MCF 10A (cell line): ENCODE measurements at regions of chr2 and their contacts with region 1.

Region 1: DNA sequence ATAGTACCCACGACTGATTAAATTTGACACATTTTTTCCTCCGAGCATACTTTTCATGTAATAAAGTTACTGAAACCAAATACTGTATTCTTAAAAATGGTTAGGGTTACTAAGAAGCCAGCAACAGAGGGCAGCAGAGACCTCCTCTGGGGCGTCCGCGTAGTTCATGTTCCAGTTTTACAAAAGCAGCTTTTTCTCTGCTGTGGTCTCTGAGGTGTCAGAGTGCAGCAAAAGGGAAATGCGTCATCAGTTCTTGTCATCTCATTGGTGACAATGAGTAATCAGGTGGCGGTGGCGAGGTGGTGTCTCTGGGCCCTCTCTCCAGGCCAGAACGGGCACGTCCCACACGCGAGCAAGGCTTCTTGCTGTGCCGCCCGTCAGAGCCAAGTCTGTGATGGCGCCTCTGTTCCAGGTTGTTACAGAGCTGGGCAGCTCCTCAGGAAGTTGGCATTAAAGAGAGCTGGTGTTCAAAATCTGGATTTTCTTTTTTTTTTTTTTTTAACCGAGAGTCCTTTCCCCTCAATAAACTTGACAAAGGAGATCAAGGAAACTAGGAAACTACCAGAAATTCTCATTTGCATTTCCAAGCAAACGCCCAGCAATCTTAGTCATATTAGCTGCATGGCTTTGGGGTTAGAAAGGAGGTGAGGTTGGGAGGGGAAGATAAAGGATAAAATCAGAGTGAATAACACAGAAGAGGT is 98.6 kb upstream of the BZW1 start:
- DNase-seq: peak; percentile 88
- H3K4me3 Mint-ChIP-seq: peak overlapping the region; percentile 66
- H3K27ac Mint-ChIP-seq: peak overlapping the region; percentile 76
- H3K4me1 Mint-ChIP-seq: peaks cover 11% of the 10 kb centered on the region
- H3K27me3 Mint-ChIP-seq: peaks cover under 1% of the 10 kb centered on the region
- CTCF ChIP-seq: peak; percentile 94

Region 2: GRCh38 chr2:200735061-200735460 is 21.9 kb after region 1 on chr2:
- CTCF ChIA-PET with region 1: interaction called, 86 read pairs
- POLR2A ChIA-PET with region 1: interaction called, 6 read pairs
- intact Hi-C with region 1: loop called (anchors 1 kb)
- DNase-seq: no peak
- H3K4me3 Mint-ChIP-seq: no peak overlapping the region
- H3K27ac Mint-ChIP-seq: no peak overlapping the region
- H3K4me1 Mint-ChIP-seq: no peaks in the 10 kb centered on the region
- H3K27me3 Mint-ChIP-seq: no peaks in the 10 kb centered on the region
- CTCF ChIP-seq: no peak

Region 3: GRCh38 chr2:200756618-200757321 is 43.6 kb after region 1 on chr2:
- CTCF ChIA-PET with region 1: interaction called, 17 read pairs
- POLR2A ChIA-PET with region 1: interaction called, 9 read pairs
- intact Hi-C with region 1: no loop called
- DNase-seq: peak; percentile 89
- H3K4me3 Mint-ChIP-seq: no peak overlapping the region
- H3K27ac Mint-ChIP-seq: peak overlapping the region; percentile 74
- H3K4me1 Mint-ChIP-seq: peaks cover 25% of the 10 kb centered on the region
- H3K27me3 Mint-ChIP-seq: no peaks in the 10 kb centered on the region
- CTCF ChIP-seq: no peak

Region 4: GRCh38 chr2:200787348-200788120 is 74.4 kb after region 1 on chr2:
- CTCF ChIA-PET with region 1: interaction called, 5 read pairs
- POLR2A ChIA-PET with region 1: interaction called, 5 read pairs
- intact Hi-C with region 1: loop called (anchors 2 kb)
- DNase-seq: peak; percentile 93
- H3K4me3 Mint-ChIP-seq: peak overlapping the region; percentile 10
- H3K27ac Mint-ChIP-seq: peak overlapping the region; percentile 89
- H3K4me1 Mint-ChIP-seq: peaks cover 19% of the 10 kb centered on the region
- H3K27me3 Mint-ChIP-seq: no peaks in the 10 kb centered on the region
- CTCF ChIP-seq: no peak

Region 5: GRCh38 chr2:200811336-200812121 is 98.4 kb after region 1 on chr2 and contains the start of gene BZW1:
- CTCF ChIA-PET with region 1: interaction called, 18 read pairs
- POLR2A ChIA-PET with region 1: interaction called, 29 read pairs
- intact Hi-C with region 1: loop called (anchors 1 kb)
- DNase-seq: peak; percentile 97
- H3K4me3 Mint-ChIP-seq: peak within 1 kb of the TSS; percentile 99
- H3K27ac Mint-ChIP-seq: peak within 1 kb of the TSS; percentile 98
- H3K4me1 Mint-ChIP-seq: peaks cover 41% of the 10 kb centered on the region
- H3K27me3 Mint-ChIP-seq: no peaks in the 10 kb centered on the region
- CTCF ChIP-seq: no peak
- total RNA-seq, gene BZW1: 353 and 371 TPM in 2 replicates

Region 6: GRCh38 chr2:200888704-200889625 is 175.8 kb after region 1 on chr2 and contains the starts of genes NIF3L1 and PPIL3:
- CTCF ChIA-PET with region 1: interaction called, 3 read pairs
- POLR2A ChIA-PET with region 1: interaction called, 12 read pairs
- intact Hi-C with region 1: loop called (anchors 1 kb)
- DNase-seq: peak; percentile 98
- H3K4me3 Mint-ChIP-seq: peak within 1 kb of the TSS; percentile 98
- H3K27ac Mint-ChIP-seq: peak within 1 kb of the TSS; percentile 98
- H3K4me1 Mint-ChIP-seq: peaks cover 21% of the 10 kb centered on the region
- H3K27me3 Mint-ChIP-seq: no peaks in the 10 kb centered on the region
- CTCF ChIP-seq: no peak
- total RNA-seq, gene NIF3L1: 19.3 and 26.1 TPM in 2 replicates
- total RNA-seq, gene PPIL3: 33.9 and 35.4 TPM in 2 replicates

Region 7: DNA sequence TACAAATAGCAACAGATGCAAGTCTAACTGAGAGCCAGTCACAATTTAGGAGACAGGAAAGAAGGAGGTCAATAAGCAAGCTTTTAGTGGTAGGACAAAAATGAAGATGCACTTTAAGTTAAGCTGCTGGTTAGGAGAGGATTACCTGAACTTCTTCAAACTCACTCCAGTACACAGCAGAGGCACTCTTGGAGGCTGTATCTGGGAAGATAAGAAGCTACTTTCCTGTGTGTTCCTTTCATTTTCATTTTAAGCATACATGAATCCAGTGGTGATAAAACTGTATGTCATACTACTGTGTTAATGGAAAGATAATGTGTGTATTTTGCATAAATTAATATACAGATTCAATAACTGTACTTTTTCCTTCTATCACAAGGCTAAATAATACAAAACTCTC is 308.8 kb after region 1 on chr2:
- CTCF ChIA-PET with region 1: no interaction called
- POLR2A ChIA-PET with region 1: no interaction called
- intact Hi-C with region 1: no loop called
- DNase-seq: no peak
- H3K4me3 Mint-ChIP-seq: no peak overlapping the region
- H3K27ac Mint-ChIP-seq: no peak overlapping the region
- H3K4me1 Mint-ChIP-seq: no peaks in the 10 kb centered on the region
- H3K27me3 Mint-ChIP-seq: no peaks in the 10 kb centered on the region
- CTCF ChIP-seq: no peak